ENCODE measurements at regions of chr5 and their contacts with region 1.

Region 1: GRCh38 chr5:116574367-116575325 is at the start of gene SEMA6A:
- DNase-seq: peak; percentile 85
- ATAC-seq: peak; percentile 83
- H3K4me3 Mint-ChIP-seq: peak within 1 kb of the TSS; percentile 68
- H3K27ac Mint-ChIP-seq: no peak within 1 kb of the TSS
- H3K4me1 Mint-ChIP-seq: peaks cover 25% of the 10 kb centered on the region
- H3K27me3 Mint-ChIP-seq: peaks cover 66% of the 10 kb centered on the region
- total RNA-seq, gene SEMA6A: not detected

Region 2: GRCh38 chr5:115816226-115817081 is 758.2 kb before region 1 on chr5 and contains the start of gene CDO1:
- CTCF ChIA-PET with region 1: no interaction called
- POLR2A ChIA-PET with region 1: no interaction called
- intact Hi-C with region 1: loop called in 1 of 2 experiments (anchors 10 kb)
- DNase-seq: peak; percentile 59
- ATAC-seq: peak; percentile 80
- H3K4me3 Mint-ChIP-seq: peak within 1 kb of the TSS; percentile 69
- H3K27ac Mint-ChIP-seq: peak within 1 kb of the TSS; percentile 7
- H3K4me1 Mint-ChIP-seq: peaks cover 19% of the 10 kb centered on the region
- H3K27me3 Mint-ChIP-seq: peaks cover 64% of the 10 kb centered on the region
- total RNA-seq, gene CDO1: 0.16 to 0.55 TPM

Region 3: DNA sequence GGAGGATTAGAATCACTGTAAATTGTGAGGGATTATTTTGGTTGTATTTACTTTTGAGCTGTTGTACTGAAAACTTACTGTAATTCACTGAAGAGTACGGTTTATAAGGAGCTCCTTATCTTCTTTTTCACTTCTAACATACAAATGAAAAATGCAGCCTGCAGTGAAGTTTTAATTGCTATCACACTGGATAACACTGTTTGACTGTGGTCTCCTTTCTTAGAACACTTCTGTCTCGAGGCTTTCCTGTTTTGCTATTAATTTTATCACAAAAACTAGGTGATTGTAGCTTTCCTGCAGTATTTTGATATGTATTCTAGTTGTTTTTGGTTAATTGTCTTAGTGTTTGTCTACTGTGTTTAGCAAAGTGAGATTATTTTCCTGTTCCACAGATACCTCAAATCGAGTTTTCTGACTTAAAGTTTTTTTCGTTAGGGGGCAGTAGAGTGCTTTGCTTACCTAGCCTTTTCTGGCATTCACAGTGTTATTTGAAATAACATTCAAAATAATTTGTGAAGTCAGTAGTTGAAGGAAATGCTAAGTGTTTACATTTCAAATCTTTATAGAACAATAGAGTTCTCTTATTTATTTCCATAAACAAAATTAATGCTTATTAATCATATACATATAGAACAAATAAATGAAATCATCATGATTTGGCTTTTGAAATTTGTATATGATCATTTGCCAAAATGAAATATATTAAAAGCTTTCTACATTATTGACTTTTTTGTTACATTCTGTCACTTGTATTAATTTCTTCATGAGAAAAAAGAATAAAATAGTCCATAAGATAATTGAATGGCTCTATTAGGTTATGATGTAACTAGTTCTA is 436.9 kb before region 1 on chr5:
- CTCF ChIA-PET with region 1: no interaction called
- POLR2A ChIA-PET with region 1: no interaction called
- intact Hi-C with region 1: loop called (anchors 5 kb)
- DNase-seq: no peak
- ATAC-seq: no peak
- H3K4me3 Mint-ChIP-seq: no peak overlapping the region
- H3K27ac Mint-ChIP-seq: no peak overlapping the region
- H3K4me1 Mint-ChIP-seq: peaks cover 18% of the 10 kb centered on the region
- H3K27me3 Mint-ChIP-seq: no peaks in the 10 kb centered on the region

Region 4: DNA sequence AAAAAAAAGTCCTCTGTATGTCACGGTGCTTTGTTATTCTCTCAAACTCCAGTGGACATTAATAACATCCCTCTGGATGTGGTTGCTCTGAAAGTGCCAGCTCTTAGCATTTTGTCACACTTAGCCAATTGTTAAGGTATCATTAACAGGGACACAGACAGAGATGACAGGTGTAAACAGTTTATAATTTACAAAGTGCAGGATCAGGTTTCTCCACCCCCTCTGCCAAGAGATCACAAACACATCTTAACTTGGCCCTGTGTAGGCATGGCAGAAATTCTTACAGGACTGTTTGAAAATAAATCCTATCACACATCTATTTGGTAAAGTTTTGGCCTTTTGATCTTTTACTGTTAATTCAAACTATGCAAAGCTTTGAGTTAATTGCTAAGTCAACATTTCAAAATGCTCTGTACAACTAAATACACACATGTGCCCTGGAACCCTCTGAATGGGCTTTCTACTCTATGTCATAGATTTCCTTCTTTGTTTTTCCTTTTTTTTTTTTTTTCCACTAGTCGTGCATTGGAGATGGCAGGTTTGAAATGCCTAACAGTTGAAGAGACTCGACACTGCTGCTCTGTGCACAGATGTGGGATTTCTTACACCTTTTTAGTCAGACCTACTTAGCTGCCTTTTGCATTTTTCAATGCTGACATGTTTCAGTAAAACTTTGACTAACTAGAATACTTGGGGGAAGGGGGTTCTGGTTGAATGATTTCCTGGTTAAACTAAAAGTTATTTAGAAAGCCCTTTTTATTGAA is 41.7 kb before region 1 on chr5:
- CTCF ChIA-PET with region 1: no interaction called
- POLR2A ChIA-PET with region 1: no interaction called
- intact Hi-C with region 1: no loop called
- DNase-seq: no peak
- ATAC-seq: no peak
- H3K4me3 Mint-ChIP-seq: no peak overlapping the region
- H3K27ac Mint-ChIP-seq: no peak overlapping the region
- H3K4me1 Mint-ChIP-seq: no peaks in the 10 kb centered on the region
- H3K27me3 Mint-ChIP-seq: no peaks in the 10 kb centered on the region

Region 5: DNA sequence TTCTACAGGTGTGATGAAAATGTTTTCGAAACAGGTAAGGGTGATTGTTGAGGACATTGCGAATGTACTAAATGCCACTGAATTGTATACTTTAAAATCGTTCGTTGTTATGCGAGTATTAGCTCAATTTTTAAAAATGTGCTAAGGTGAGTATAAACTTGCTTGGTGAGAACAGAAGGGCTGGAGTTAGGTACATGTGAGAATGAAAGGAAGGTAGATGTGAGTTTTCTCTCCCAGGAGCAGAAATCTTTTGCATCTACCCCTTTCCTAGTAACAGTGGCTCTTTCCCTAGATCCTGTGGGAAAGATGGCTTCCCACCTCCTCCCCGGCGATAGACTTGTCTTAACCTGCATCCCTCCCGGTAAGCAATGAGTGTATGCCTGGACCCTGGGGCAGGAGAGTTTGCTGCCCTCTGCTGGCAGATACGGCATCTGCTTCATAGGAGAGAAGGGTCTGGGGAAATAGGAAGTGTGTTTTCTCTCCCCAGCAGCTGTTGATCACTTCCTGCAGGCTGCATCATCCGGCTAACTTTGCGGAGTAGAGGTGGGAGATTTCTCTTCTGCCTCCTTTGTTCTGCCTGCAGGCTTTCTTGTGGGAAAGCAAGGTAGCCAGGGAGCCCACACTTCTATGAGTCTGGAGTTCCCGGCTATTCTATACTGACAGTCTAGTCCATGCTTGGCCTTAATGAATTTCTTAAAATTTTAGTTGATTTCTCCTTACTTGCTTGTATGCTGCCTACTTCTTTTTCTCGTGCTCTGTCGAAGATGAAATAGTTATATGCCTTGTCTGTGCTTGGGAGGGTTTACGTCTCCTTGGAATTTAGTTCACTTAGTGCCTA is 373.3 kb after region 1 on chr5:
- CTCF ChIA-PET with region 1: no interaction called
- POLR2A ChIA-PET with region 1: no interaction called
- intact Hi-C with region 1: loop called (anchors 1 to 5 kb)
- DNase-seq: peak; percentile 79
- ATAC-seq: peak; percentile 87
- H3K4me3 Mint-ChIP-seq: no peak overlapping the region
- H3K27ac Mint-ChIP-seq: no peak overlapping the region
- H3K4me1 Mint-ChIP-seq: no peaks in the 10 kb centered on the region
- H3K27me3 Mint-ChIP-seq: no peaks in the 10 kb centered on the region

Measured in activated CD4-positive, alpha-beta T cell treated with anti-CD3 and anti-CD28 coated beads for 36 hours (primary cell).